ENCODE measurements at regions of chr1 and their contacts with region 1.

Region 1: GRCh38 chr1:119647734-119648619 is at the start of gene ZNF697:
- DNase-seq: peak; percentile 97 to 100 (median 98)

Region 2: DNA sequence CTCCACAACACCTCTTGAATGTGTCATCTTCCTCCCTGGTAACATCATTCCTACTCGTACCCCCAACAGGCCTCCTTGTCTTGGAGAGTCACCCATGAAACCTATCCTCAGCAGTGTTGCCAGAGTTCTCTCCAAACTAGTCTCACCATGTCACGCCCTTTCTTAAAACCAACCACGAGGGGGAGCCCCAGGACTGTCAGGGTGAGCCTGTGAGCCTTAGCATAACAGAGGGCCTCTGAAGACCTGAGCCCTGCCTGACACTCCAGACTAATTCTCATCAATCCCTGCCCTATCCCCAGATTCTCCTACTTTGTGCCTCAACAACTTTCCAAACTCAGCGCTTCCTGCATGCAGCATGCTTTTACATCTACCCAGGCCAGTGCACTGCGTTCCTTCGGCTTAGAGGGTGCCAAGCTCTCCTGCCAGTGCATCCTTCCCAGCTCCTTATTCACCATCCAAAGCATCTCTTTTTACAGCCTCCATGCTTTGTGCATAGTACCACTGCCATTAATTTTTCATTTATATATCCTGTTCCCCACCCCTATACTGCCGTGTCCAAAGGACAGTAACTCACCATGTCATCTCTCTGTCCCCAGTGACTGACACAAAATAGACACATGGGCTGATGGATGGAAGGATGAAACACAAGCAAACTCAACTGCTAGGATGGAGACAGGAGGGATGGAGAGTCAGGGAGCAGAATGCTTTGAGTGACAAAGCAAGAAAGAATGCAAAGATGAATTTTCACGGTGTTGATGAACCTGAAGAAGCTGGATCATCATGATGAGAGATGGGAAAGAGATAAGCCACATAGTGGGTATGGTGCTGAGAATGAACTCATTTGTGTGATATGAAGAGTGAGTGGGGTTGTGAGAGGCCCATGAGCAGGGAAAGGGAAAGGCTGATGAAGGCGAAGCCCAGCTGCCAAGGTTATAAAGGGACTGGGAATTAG is 33.9 kb before region 1 on chr1:
- intact Hi-C with region 1: loop called (anchors 5 kb)
- DNase-seq: peak; percentile 57 to 97 (median 87)

Region 3: DNA sequence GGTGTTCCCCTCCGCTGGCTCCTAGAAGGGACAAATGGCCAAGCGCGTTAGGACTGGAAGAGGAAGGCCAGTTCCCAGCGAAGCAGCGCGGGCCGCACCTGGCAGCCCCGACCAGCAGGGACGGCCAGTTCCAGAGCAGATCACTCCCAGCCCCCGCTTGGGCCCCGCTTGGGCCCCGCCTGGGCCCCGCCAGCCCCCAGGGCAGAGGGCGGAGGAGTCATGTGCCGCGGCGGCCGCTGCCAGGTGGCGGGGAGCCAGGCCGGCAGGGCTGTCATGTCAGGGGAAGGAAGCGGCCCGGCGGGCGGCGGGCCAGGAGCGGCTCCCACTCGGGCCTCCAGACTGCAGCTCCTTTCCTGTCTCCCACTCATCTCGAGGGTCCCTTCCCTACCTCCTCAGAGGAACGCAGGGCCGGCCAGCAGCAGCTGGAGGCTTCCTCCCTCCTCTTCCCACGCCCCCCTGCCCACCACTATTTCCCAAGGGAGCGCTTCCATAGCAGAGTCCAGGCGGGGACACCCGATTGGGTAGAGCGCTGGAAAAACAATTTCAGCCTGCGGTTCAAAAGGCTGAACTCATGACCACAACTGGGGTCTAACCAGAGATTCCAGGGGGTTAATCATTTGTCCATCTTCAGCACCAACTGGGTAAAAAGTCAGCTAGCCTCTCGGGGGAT is 16.4 kb before region 1 on chr1:
- intact Hi-C with region 1: loop called (anchors 2 kb)
- DNase-seq: peak in 9 of 10 donors; percentile 42 to 94 (median 63)

Measured in posterior cingulate gyrus (tissue), 11 donors.